Activated T-helper 2 cell treated with anti-CD3 and anti-CD28 coated beads, Interferon-gamma antibody, Interleukin-2, Interleukin-4, amounts not matched to agents 10 μg/mL and 5 μg/mL and 100 μg/mL, durations not matched to agents 14 hours and 24 hours and 36 hours (primary cell): ENCODE measurements at regions of chr10 and their contacts with region 1.

Region 1: DNA sequence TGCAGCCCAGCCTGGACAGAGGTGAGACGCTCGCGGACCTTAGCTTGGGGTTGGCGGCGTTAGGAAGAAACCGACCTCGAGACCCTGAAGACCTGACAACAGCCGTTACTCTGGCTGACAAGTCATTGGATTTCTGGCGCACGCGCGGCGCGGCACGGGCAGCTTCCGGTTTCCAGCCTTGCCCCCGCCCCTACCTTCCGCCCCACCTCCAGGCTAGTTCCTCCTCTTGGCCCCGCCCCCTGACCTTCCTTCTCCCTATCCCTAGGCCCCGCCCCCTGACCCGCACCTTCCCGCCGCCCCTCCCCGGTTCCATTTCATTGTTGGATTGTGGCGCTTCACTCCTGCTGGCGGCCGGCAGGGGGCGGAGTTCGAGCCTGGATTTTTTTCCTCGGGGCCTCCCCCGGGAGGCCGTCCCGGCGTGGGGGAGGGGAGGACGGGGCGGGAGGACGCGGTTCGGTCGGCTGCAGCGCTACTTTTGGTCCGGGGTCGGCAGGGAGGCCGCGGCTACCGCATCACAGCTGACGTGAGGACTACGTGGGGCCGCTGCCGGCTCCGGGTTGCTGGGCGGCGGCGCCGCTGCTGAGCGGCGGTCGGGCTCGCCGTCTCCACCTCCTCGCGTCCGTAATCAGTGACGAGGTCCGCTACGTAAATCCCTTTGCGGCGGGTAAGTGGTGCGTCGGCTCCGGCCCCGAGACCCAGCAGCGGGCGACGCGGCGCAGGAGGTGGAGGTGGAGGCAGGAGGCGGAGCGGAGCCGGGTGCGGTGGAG is at the start of gene CREM:
- DNase-seq: peak; percentile 97
- H3K4me3 Mint-ChIP-seq: peak within 1 kb of the TSS; percentile 90
- H3K27ac Mint-ChIP-seq: peak within 1 kb of the TSS; percentile 98
- H3K4me1 Mint-ChIP-seq: peaks cover 47% of the 10 kb centered on the region
- H3K27me3 Mint-ChIP-seq: no peaks in the 10 kb centered on the region
- total RNA-seq, gene CREM: 189 and 190 TPM in 2 replicates

Region 2: DNA sequence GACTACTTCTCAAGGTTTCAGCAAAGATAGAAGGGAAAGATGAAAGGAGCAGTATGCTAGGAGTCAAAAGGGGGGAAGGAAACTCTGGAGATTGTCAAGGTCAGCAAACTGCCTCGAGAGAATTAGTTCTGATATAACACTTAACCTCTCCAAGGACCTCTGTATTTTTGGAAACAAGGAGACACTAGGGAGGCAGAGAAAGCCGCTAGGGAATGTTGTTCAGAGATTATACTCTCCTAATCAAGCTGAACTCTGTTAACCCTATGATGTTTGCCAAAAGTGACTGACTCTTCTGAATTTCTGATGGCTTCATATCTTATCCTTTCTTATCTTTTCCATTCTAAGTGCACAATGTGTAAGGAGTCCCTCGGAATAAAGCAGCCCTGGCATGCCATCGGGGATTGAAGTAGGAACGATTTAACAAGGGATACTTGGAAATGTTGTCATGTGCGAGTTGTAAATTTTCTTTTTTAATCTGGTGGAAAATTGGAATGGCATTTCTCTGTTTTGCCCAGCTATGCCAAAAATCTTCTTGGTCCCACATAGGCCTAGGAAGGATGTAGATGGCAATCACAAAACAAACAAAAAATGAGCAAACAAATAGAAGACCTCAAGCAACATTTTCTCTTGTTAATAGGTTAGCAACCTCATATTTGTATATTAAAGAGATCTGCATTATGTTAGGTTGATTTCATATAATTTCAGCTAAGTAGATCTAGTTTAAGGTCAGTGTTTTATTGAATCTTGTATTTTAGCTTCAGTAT is 27.2 kb after region 1 on chr10:
- intact Hi-C with region 1: loop called (anchors 1 kb)
- DNase-seq: no peak
- H3K4me3 Mint-ChIP-seq: no peak overlapping the region
- H3K27ac Mint-ChIP-seq: no peak overlapping the region
- H3K4me1 Mint-ChIP-seq: peaks cover 40% of the 10 kb centered on the region
- H3K27me3 Mint-ChIP-seq: no peaks in the 10 kb centered on the region

Region 3: GRCh38 chr10:35218339-35218955 is 91.7 kb after region 1 on chr10:
- intact Hi-C with region 1: loop called (anchors 1 kb)
- DNase-seq: peak; percentile 78
- H3K4me3 Mint-ChIP-seq: peak overlapping the region; percentile 66
- H3K27ac Mint-ChIP-seq: peak overlapping the region; percentile 97
- H3K4me1 Mint-ChIP-seq: peaks cover 62% of the 10 kb centered on the region
- H3K27me3 Mint-ChIP-seq: no peaks in the 10 kb centered on the region

Region 4: DNA sequence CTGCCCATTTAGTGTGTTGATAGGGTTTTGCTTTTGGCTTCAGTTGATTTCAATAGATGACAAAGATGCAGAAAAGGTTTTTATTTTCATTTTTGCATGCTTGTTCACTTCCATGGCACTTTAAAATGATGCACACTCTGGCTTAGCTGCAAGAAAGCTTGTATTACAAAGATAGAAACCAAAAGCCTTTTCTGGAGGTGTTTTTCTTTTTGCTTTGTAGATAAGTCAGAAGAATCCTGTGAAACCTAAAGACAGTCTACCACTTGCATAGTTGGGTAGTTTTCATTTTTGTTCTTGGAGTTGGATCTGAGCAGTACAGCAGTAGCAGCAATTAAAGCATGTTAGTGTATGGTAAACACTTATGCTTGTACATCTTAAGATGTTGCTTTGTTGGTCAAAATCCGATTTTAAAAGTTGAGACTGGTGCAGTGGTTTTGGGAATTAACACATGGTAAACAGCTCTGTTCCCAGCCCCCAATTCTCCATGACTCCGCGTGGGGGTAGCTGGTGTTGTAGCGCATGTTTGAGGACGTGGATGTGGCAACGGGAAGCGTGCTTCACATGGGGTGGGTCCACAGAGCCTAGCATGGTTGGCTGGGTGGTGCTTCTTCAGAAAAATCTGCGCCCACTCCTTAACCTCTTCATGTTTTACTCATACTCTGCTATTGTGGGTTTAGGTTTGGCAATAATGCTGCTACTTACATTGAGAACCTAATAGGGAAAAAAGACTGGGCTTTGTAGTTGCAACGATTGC is 229.4 kb after region 1 on chr10:
- intact Hi-C with region 1: loop called (anchors 1 kb)
- DNase-seq: no peak
- H3K4me3 Mint-ChIP-seq: peak overlapping the region; percentile 63
- H3K27ac Mint-ChIP-seq: peak overlapping the region; percentile 92
- H3K4me1 Mint-ChIP-seq: peaks cover 59% of the 10 kb centered on the region
- H3K27me3 Mint-ChIP-seq: no peaks in the 10 kb centered on the region

Region 5: DNA sequence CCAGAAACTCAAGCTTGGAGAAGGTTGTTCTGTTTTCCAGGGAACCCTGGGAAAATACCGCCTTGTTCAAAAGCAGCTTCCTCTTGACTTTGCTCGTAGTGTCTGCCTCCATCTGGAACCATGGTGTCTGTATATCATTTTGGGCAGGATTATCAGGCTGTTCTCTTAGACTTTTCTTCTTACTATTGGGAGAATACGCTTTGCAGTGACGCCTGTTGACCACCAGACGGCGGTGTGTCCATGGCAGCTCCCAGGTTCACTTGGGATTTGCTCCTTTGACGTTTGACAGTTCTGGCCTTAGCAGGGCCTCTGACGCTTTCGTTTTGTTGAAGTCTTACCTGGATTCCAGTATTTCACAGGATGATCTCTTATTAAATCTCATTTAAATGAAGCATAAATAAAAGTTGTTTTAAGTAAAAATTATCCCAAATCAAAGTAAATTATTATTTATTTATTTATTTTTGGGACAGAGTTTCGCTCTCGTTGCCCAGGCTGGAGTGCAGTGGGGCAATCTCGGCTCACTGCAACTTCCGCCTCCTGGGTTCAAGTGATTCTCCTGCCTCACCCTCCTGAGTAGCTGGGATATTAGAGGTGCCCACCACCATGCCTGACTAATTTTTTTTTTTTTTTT is 436.7 kb after region 1 on chr10:
- intact Hi-C with region 1: loop called (anchors 10 kb)
- DNase-seq: peak; percentile 25
- H3K4me3 Mint-ChIP-seq: no peak overlapping the region
- H3K27ac Mint-ChIP-seq: no peak overlapping the region
- H3K4me1 Mint-ChIP-seq: no peaks in the 10 kb centered on the region
- H3K27me3 Mint-ChIP-seq: no peaks in the 10 kb centered on the region